ENCODE measurements at regions of chr9 and their contacts with region 1.

Region 1: DNA sequence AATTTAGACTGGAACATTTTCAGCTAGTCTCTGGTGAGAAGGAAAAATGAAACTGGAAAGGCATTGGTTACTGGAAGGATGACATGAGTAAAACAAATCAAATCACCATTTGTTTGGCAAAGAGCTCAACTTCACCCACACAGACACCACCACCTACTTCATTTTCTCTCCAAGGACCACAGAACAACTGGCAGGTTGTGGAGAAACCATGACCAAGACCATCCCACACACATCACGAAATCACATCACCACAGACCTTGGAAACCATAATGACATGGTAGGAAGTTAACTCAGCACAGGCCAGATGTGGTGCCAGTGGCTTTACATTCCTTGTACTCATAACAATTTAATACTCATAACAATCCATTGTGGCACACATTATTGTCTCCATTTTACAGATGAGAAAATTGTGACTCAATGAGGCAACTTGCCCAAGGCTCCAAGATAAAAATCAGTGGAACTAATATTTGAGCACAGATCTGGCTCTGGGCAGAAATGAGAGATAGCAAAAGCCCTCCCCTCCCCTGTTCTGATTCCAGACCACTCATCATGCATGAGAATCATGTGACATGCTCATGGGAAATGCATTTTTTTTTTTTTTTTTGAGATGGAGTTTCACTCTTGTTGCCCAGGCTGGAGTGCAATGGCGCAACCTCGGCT is 7.5 kb downstream of the OR1K1 start:
- DNase-seq: no peak
- H3K4me3 ChIP-seq: no peak overlapping the region
- H3K27ac ChIP-seq: no peak overlapping the region
- H3K4me1 ChIP-seq: no peaks in the 10 kb centered on the region
- H3K27me3 ChIP-seq: no peaks in the 10 kb centered on the region
- CTCF ChIP-seq: no peak
- POLR2A ChIP-seq: no peak

Region 2: DNA sequence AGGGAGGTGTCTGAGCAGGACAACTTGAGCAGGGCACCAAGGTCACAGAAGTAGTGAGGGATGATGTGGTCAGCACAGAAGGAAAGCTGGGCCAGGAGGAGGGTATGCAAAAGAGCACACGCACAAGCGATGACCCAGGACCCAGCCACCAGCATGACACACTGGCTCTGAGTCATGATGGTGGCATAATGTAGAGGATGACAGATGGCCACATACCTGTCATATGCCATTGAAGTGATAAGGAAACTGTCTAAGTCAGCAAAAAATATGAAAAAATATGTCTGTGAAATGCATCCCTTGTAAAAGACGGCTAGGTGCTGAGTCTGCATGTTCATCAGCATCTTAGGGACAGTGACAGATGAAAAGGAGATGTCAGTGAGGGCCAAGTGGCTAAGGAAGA is 330.1 kb before region 1 on chr9:
- intact Hi-C with region 1: loop called (anchors 10 kb)
- DNase-seq: no peak
- H3K4me3 ChIP-seq: no peak overlapping the region
- H3K27ac ChIP-seq: no peak overlapping the region
- H3K4me1 ChIP-seq: no peaks in the 10 kb centered on the region
- H3K27me3 ChIP-seq: no peaks in the 10 kb centered on the region
- CTCF ChIP-seq: no peak
- POLR2A ChIP-seq: no peak

Measured in uterus (tissue), 4 donors.